GM10248 (cell line): ENCODE measurements at regions of chr10 and their contacts with region 1.

Region 1: DNA sequence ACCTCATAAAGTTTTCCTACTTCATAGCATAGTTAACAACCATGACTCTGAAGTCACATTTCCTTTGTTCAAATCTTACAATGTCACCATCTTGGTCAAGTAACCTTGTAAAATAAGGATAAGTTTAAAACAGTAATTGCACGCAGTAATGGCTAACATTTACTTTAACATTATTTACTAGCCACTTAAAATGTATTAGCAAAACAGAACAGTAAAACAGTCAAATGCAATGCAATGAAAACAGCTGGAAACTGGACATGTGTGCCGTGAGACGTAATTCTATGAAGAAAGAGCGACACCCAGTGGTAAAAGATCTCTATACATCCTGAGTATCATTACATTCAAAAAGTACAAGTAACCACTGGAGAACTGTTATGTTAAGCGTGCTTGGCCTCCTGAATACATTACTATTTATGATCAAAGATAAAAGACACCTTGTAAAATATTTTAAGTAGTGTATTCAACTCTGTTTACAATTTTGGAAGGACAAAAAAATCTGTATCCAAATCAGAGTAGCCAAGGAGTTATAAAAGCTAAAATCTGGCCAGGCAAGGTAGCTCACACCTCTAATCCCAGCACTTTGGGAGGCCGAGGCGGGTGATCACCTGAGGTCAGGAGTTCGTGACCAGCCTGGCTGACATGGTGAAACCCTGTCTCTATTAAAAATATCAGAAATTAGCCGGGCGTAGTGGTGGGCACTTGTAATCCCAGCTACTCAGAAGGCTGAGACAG is 27.2 kb downstream of the ATE1 start:
- DNase-seq: peak; percentile 60
- CTCF ChIP-seq: peak; percentile 64

Region 2: DNA sequence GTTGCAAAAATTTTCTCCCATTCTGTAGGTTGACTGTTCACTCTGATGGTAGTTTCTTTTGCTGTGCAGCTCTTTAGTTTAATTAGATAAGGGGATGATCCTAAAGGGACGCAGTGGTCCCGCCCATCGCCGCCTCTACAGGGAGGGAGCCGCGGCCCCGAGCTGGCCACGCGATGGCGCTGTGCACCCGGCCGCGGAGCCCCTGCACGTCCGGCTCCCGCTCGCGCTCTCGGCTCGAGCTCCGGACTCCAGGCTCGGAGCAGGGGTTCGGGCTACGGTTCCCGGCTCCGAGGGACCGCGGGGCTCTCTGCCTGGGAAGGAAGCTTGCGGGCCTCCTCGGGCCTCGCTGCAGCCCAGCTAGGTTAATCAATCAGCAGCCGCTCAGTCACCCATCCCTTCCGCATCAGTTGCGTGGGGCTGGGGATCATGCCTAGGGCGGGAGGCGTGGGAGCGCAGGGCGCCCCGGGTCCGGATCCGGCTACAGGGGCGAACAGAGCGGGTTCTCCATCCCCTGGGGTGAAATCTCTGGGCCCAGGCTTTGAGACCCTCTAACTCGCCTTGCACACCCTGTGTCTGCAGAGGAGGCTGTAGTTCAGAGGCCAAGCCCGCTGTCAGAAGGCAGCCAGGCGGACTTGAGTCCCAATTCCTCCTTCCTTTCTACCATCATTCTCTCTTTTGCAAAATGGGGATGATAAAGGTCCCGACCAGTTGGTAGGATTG is 951.6 kb before region 1 on chr10:
- CTCF ChIA-PET with region 1: interaction called, 19 read pairs
- POLR2A ChIA-PET with region 1: no interaction called
- DNase-seq: peak; percentile 86
- CTCF ChIP-seq: peak; percentile 88

Region 3: GRCh38 chr10:121580276-121581116 is 320.1 kb before region 1 on chr10:
- CTCF ChIA-PET with region 1: no interaction called
- POLR2A ChIA-PET with region 1: no interaction called
- DNase-seq: no peak
- CTCF ChIP-seq: no peak

Region 4: DNA sequence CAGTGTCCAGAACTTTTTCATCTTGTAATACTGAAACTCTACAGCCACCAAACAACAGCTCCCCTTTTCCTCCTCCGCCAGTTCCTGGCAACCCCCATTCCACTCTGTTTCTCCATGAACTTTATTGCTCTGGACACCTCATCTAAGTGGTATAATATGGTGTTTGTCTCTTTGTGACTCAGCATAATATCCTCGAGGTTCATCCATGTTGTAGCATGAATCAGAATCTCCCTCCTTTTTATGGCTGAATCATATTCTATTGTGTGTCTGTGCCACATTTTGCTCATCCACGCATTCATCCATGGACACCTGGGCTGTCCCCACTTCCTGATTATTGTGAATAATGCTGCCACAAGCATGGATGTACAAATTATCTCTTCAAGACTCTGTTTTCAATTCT is 177.9 kb before region 1 on chr10:
- CTCF ChIA-PET with region 1: no interaction called
- POLR2A ChIA-PET with region 1: no interaction called
- DNase-seq: no peak
- CTCF ChIP-seq: no peak

Region 5: DNA sequence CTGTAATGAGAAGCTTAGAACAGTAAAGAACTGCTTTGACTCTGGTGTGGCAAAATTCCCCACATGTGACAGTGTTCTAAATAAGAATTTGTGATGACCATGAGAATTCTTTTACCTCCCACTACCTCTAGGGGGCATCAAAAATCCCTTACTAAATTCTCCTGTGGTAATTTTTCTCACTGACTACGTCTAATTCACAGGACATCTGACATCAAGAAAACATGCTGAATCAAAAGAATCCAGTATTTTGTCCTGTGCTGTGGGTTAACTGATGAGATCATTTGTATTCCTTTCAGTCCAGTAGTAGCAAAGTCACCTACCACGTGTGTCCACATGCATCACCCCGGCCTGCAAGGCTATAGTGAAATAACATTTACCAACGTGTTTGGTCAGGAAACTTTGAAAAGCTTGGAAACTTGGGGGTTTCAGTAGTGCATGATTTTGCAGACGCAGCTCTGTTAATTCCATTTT is 76.6 kb before region 1 on chr10:
- CTCF ChIA-PET with region 1: interaction called, 20 read pairs
- POLR2A ChIA-PET with region 1: no interaction called
- DNase-seq: peak; percentile 48
- CTCF ChIP-seq: peak; percentile 41

Region 6: GRCh38 chr10:121880895-121881294 is 19.7 kb before region 1 on chr10:
- CTCF ChIA-PET with region 1: interaction called, 58 read pairs
- POLR2A ChIA-PET with region 1: no interaction called
- DNase-seq: no peak
- CTCF ChIP-seq: no peak

Region 7: DNA sequence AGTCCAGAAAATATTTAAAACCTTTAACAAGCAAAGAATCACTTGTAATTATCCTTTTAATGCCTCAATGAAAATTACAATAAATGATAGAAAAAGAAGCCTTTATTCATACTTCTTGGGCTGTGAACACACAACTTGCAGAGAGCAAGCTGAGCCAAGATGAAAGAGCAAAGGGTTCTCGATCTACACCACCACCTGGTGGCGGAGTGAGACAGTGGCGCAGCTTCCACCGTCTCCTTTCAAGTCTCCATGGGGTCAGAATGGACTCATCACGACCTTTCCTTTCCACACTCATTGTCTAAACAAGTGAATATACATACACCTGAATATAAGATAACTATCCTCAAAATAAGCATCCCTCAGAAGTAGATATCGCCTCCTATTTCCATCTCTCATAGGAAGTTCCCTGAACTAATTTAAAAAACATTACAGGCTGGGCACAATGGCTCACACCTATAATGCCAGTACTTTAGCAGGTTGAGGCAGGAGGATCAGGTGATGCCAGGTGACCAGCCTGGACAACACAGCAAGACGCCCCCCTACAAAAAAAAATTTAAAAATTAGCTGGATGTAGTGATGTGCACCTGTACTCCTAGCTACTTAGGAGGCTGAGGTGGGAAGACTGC is 13.5 kb before region 1 on chr10:
- CTCF ChIA-PET with region 1: interaction called, 58 read pairs
- POLR2A ChIA-PET with region 1: no interaction called
- DNase-seq: peak; percentile 62
- CTCF ChIP-seq: peak; percentile 54

Region 8: GRCh38 chr10:121910673-121911420 is 10.2 kb after region 1 on chr10:
- CTCF ChIA-PET with region 1: interaction called, 14 read pairs
- POLR2A ChIA-PET with region 1: no interaction called
- DNase-seq: peak; percentile 34
- CTCF ChIP-seq: no peak

Region 9: DNA sequence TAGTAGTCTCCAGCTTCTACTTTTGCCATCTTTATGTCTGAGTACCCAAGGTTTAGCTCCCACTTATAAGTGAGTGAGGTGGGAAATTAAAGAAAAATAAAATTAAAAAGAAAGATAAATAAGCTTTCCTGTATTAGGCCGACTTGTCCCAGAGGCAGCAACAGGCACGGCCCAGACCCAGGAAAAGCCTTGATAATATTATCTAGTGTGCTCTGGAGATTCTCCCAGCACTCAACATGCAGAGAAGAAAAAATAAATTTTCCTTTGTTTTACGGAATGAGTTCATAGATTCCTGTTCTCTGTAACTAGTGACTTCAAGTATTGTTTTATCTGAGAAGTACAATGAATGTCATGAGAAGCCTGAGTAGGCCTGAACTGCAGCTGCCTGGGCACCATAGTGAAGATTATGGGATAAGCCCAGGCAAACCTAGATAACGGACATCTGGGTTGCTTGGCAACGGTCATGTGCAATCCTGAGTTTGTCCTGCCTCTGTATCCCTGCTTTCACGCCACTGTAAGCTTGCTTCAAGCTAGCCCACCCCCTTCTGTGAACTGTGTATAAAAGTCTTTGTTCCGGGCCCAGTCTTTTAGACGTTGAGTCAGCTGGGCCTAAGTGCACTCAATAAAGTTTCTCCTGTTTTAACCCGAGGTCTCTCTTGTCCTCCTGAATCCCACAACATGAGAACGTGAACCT is 20.8 kb after region 1 on chr10:
- CTCF ChIA-PET with region 1: interaction called, 13 read pairs
- POLR2A ChIA-PET with region 1: no interaction called
- DNase-seq: no peak
- CTCF ChIP-seq: no peak

Region 10: GRCh38 chr10:123096452-123096851 is 1195.8 kb after region 1 on chr10:
- CTCF ChIA-PET with region 1: no interaction called
- POLR2A ChIA-PET with region 1: no interaction called
- DNase-seq: no peak
- CTCF ChIP-seq: no peak